ENCODE measurements at regions of chr5 and their contacts with region 1.

Region 1: GRCh38 chr5:150523472-150524350 is 15.8 kb downstream of the NDST1 start:
- DNase-seq: peak; percentile 69
- H3K4me3 ChIP-seq: no peak overlapping the region
- H3K4me3 Mint-ChIP-seq: peak overlapping the region; percentile 51
- H3K27ac Mint-ChIP-seq: peak overlapping the region; percentile 63
- H3K4me1 ChIP-seq: peaks cover 38% of the 10 kb centered on the region
- H3K4me1 Mint-ChIP-seq: peaks cover 59% of the 10 kb centered on the region
- H3K27me3 ChIP-seq: no peaks in the 10 kb centered on the region
- H3K27me3 Mint-ChIP-seq: no peaks in the 10 kb centered on the region
- CTCF ChIP-seq: peak; percentile 65 to 70

Region 2: DNA sequence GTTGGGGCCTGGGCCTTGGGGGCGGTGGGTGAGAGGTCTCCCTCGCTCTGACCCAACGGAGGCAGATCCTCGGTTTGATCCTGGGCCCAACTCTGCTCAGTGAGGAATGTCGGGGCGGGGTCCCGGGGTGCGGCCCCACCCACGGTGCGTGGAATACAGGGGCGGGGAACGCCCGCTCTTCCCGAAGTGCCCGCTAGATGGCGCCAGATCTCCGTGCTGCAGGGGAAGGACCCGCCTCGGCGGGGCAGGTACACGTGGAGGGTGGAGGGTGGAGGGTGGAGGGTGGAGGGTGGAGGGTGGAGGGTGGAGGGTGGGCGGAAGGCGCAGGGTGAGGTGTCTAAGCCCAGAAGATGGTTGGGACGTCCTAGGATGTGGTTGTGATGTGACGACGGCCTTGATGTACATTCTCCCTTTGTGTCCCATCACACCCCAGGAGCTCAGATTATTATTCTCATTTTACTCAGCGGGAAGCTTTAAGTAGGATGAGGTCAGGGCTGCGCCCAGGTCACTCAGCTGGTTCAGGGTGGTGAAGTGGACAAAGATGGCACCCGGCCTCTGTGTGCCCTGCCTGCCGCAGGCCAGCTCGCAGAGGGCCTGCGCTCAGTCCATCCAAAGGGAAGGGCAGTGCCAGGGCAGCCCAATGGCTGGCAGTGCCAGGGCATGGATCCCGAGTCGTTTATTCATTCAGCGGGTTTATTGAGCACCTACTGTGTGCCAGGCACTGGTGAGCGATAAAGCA is 64.7 kb before region 1 on chr5:
- CTCF ChIA-PET with region 1: interaction called, 28 read pairs
- POLR2A ChIA-PET with region 1: no interaction called
- intact Hi-C with region 1: loop called (anchors 1 kb)
- DNase-seq: peak; percentile 90 to 95
- H3K4me3 ChIP-seq: no peak overlapping the region
- H3K4me3 Mint-ChIP-seq: peak overlapping the region; percentile 25
- H3K27ac Mint-ChIP-seq: peak overlapping the region; percentile 19
- H3K4me1 ChIP-seq: peaks cover 10% of the 10 kb centered on the region
- H3K4me1 Mint-ChIP-seq: peaks cover 15% of the 10 kb centered on the region
- H3K27me3 ChIP-seq: no peaks in the 10 kb centered on the region
- H3K27me3 Mint-ChIP-seq: no peaks in the 10 kb centered on the region
- CTCF ChIP-seq: peak; percentile 86 to 91

Region 3: DNA sequence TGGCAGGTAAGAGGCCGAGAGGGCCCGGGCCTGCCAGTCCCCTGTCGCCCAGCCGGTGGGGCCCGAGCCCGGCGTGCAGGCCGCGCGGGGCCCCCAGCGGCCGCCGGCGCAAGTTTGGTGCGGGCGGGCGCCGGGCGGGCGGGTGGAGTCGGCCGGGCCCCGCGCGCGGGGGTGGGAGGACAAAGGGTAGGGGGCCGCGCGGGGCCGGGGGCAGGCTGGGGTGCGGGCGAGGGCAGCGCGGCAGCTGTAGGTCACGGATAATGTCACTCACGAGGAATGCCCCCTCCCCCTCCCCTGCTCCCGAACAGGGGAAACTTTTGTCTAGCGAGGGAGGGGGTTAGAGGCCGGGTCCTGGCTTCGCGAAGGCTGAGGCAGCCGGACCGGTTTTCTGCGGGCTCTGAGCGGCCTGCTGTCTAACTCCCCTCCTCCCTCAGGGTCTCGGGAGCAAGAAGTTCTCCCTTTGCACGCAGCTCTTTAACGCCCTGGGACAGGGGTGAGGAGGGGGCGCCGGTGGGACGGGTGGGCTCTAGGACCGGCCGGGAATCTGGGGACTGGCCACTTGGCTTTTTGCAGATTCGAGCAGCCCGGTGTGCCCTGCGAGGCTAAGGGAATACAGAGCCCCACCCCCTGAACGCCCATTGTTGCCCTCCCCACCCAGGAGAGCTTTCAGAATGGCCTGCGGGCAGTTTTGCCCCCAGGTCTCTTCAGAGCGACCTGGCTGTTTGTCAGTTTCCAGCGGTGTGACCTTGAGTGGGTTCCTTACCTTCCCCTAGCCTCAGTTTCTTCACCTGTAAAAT is 37.1 kb before region 1 on chr5:
- CTCF ChIA-PET with region 1: interaction called, 5 read pairs
- POLR2A ChIA-PET with region 1: interaction called, 10 read pairs
- intact Hi-C with region 1: loop called (anchors 1 kb)
- DNase-seq: peak; percentile 96
- H3K4me3 ChIP-seq: peak overlapping the region; percentile 99
- H3K4me3 Mint-ChIP-seq: peak overlapping the region; percentile 66
- H3K27ac Mint-ChIP-seq: peak overlapping the region; percentile 13
- H3K4me1 ChIP-seq: peaks cover 58% of the 10 kb centered on the region
- H3K4me1 Mint-ChIP-seq: peaks cover 57% of the 10 kb centered on the region
- H3K27me3 ChIP-seq: no peaks in the 10 kb centered on the region
- H3K27me3 Mint-ChIP-seq: no peaks in the 10 kb centered on the region
- CTCF ChIP-seq: peak in 1 of 2 experiments; percentile 1

Region 4: GRCh38 chr5:150498501-150498900 is 25.2 kb before region 1 on chr5:
- CTCF ChIA-PET with region 1: no interaction called
- POLR2A ChIA-PET with region 1: no interaction called
- intact Hi-C with region 1: loop called (anchors 1 kb)
- DNase-seq: no peak
- H3K4me3 ChIP-seq: no peak overlapping the region
- H3K4me3 Mint-ChIP-seq: no peak overlapping the region
- H3K27ac Mint-ChIP-seq: peak overlapping the region; percentile 1
- H3K4me1 ChIP-seq: peaks cover 41% of the 10 kb centered on the region
- H3K4me1 Mint-ChIP-seq: peaks cover 42% of the 10 kb centered on the region
- H3K27me3 ChIP-seq: no peaks in the 10 kb centered on the region
- H3K27me3 Mint-ChIP-seq: no peaks in the 10 kb centered on the region
- CTCF ChIP-seq: no peak

Region 5: GRCh38 chr5:150511578-150512367 is 11.9 kb before region 1 on chr5:
- CTCF ChIA-PET with region 1: interaction called, 24 read pairs
- POLR2A ChIA-PET with region 1: no interaction called
- intact Hi-C with region 1: loop called (anchors 1 kb)
- DNase-seq: peak; percentile 61 to 78
- H3K4me3 ChIP-seq: no peak overlapping the region
- H3K4me3 Mint-ChIP-seq: peak overlapping the region; percentile 75
- H3K27ac Mint-ChIP-seq: peak overlapping the region; percentile 96
- H3K4me1 ChIP-seq: peaks cover 71% of the 10 kb centered on the region
- H3K4me1 Mint-ChIP-seq: peaks cover 57% of the 10 kb centered on the region
- H3K27me3 ChIP-seq: no peaks in the 10 kb centered on the region
- H3K27me3 Mint-ChIP-seq: no peaks in the 10 kb centered on the region
- CTCF ChIP-seq: no peak

Region 6: GRCh38 chr5:150542933-150543445 is 19.3 kb after region 1 on chr5:
- CTCF ChIA-PET with region 1: interaction called, 3 read pairs
- POLR2A ChIA-PET with region 1: interaction called, 6 read pairs
- intact Hi-C with region 1: loop called (anchors 1 kb)
- DNase-seq: peak; percentile 86 to 94
- H3K4me3 ChIP-seq: no peak overlapping the region
- H3K4me3 Mint-ChIP-seq: peak overlapping the region; percentile 42
- H3K27ac Mint-ChIP-seq: peak overlapping the region; percentile 81
- H3K4me1 ChIP-seq: peaks cover 34% of the 10 kb centered on the region
- H3K4me1 Mint-ChIP-seq: peaks cover 25% of the 10 kb centered on the region
- H3K27me3 ChIP-seq: no peaks in the 10 kb centered on the region
- H3K27me3 Mint-ChIP-seq: no peaks in the 10 kb centered on the region
- CTCF ChIP-seq: no peak

Measured in Caco-2 (cell line).